Activated T-helper 2 cell treated with anti-CD3 and anti-CD28 coated beads, Interferon-gamma antibody, Interleukin-2, Interleukin-4, amounts not matched to agents 10 μg/mL and 5 μg/mL and 100 μg/mL, durations not matched to agents 14 hours and 24 hours and 36 hours (primary cell): ENCODE measurements at regions of chr1 and their contacts with region 1.

Region 1: GRCh38 chr1:185996211-185996610 is 262.0 kb downstream of the HMCN1 start:
- DNase-seq: no peak
- H3K4me3 Mint-ChIP-seq: no peak overlapping the region
- H3K27ac Mint-ChIP-seq: no peak overlapping the region
- H3K4me1 Mint-ChIP-seq: no peaks in the 10 kb centered on the region
- H3K27me3 Mint-ChIP-seq: no peaks in the 10 kb centered on the region

Region 2: GRCh38 chr1:186033744-186034345 is 37.6 kb after region 1 on chr1:
- intact Hi-C with region 1: loop called (anchors 1 kb)
- DNase-seq: no peak
- H3K4me3 Mint-ChIP-seq: no peak overlapping the region
- H3K27ac Mint-ChIP-seq: no peak overlapping the region
- H3K4me1 Mint-ChIP-seq: no peaks in the 10 kb centered on the region
- H3K27me3 Mint-ChIP-seq: no peaks in the 10 kb centered on the region